ENCODE measurements at regions of chr18 and their contacts with region 1.

Region 1: DNA sequence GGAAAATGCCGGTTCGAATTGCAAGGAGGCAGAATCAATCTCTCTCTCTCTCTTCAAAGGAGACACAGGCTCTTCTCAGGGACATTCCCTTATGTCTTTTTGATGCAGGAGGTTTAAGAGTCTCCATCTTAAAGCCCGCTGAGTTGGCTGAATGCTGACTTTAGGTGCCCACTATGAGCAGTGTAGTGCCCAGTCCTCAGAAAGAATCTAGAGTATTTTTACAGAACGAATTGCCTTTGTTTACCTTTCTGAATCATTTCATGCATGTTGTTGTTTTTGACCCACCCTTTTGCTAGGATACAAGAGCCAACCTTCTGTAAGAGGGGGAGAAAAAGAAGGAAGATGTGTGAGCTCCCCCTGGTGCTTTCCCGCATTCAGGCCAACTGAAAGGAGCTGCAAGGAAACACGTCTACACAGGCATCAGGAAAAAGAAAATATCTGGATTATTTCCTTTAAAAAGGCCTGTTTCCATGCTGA is 193.5 kb upstream of the TCF4 start:
- DNase-seq: peak; percentile 33 to 67
- ATAC-seq: peak; percentile 57 to 80 (median 73)
- H3K4me3 ChIP-seq: no peak overlapping the region
- H3K27ac ChIP-seq: peak overlapping the region; percentile 82
- H3K4me1 ChIP-seq: peaks cover 9% of the 10 kb centered on the region
- H3K27me3 ChIP-seq: no peaks in the 10 kb centered on the region
- CTCF ChIP-seq: peak; percentile 73

Region 2: DNA sequence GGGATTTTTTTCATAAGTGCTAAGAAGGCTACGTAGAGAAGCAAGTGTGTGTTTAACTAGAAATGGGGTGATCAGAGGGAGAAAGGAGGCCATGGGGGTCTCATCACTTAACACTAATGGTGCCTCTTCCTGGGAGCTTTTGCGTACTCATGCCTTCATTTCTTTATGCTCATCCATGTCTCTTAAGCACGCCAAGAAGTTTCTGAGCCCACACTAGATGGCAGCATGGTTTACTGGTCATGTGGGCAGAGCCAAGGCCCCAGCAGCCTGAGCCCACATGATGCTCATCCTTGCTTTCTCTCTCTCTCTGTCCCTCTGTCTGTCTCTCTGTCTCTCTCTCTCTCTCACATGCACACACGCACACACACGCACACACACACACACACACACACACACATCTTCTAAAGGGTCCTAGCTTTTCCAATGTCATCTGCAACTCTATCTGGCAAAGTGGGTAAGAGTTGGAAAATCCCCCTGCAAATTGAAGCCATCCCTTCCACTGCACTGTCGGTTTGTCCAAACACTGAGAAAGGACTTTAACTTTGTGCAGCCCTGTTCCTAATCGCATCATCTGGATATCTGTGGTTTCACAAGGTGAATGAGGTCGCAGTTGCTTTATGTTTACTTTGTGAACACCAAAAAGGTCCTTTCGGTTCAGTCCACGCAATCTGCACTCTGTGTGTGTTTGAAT is 685.1 kb before region 1 on chr18:
- intact Hi-C with region 1: loop called in 1 of 2 experiments (anchors 10 kb)
- DNase-seq: peak in 1 of 2 donors; percentile 53
- ATAC-seq: peak in 3 of 4 donors; percentile 57 to 70 (median 59)
- H3K4me3 ChIP-seq: no peak overlapping the region
- H3K27ac ChIP-seq: no peak overlapping the region
- H3K4me1 ChIP-seq: no peaks in the 10 kb centered on the region
- H3K27me3 ChIP-seq: no peaks in the 10 kb centered on the region
- CTCF ChIP-seq: peak; percentile 34

Region 3: DNA sequence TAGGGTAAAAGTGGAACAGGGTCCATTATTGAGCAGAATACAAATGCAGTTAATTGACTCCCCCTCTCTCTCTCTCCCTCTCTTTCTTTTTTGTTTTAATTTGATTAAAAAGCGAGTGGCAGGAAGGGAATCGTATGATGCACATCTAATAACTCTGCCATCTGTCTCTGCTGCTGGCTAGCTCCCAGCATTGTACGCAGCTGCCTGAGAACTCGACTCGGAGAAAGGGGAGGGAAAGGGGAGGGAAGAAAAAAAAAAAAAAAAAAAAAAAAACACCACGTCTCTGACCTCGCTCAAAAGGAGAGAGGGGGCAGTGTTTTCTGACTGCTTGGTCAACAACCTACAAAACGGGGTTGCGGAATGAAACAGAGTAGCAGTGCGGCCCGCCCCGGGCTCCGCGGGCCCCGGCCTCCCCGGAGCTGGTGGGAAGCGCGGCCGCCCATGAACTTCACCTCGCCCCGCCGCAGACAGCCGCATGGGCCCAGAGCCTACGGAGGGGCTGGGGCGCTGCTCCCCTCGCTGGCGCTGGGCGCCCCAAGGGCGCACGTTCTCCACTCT is 459.3 kb before region 1 on chr18:
- intact Hi-C with region 1: loop called (anchors 5 kb)
- DNase-seq: peak; percentile 90 to 94
- ATAC-seq: peak; percentile 87 to 93 (median 89)
- H3K4me3 ChIP-seq: peak overlapping the region; percentile 77
- H3K27ac ChIP-seq: peak overlapping the region; percentile 89
- H3K4me1 ChIP-seq: peaks cover 40% of the 10 kb centered on the region
- H3K27me3 ChIP-seq: no peaks in the 10 kb centered on the region
- CTCF ChIP-seq: peak; percentile 8

Region 4: DNA sequence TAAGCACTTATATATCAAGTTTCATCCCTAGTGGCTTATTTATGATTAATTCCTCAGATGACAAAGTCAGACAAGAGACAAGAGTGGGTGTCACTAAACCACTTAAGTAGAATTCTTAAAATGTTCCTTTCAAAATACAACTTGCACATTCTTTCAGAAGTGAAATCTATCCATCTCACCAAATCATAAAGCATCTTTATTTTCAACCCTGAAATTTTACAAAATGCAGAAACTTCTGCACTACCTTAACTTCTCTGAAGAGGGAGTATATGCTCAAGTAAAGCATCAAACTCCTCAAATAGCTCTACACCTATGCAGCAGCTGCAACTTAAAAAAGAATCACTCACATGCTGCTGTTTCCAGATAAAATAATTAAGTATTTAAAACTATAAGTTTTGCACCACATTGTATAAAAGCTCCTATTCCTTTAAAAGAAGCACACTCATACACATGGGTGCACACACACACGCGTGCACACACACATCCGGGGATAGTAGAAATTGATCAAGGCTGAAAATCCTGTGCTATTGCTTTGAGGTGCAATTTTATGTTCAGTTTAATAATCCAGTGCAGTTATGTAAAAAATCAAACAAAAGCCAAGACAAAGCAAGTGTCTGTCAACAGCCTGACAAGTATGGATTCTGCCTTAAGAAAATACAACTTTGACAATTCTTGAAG is 438.0 kb before region 1 on chr18:
- intact Hi-C with region 1: loop called in 1 of 2 experiments (anchors 2 kb)
- DNase-seq: no peak
- ATAC-seq: peak in 3 of 4 donors; percentile 63 to 75 (median 72)
- H3K4me3 ChIP-seq: no peak overlapping the region
- H3K27ac ChIP-seq: no peak overlapping the region
- H3K4me1 ChIP-seq: peaks cover 43% of the 10 kb centered on the region
- H3K27me3 ChIP-seq: no peaks in the 10 kb centered on the region
- CTCF ChIP-seq: peak; percentile 65

Region 5: DNA sequence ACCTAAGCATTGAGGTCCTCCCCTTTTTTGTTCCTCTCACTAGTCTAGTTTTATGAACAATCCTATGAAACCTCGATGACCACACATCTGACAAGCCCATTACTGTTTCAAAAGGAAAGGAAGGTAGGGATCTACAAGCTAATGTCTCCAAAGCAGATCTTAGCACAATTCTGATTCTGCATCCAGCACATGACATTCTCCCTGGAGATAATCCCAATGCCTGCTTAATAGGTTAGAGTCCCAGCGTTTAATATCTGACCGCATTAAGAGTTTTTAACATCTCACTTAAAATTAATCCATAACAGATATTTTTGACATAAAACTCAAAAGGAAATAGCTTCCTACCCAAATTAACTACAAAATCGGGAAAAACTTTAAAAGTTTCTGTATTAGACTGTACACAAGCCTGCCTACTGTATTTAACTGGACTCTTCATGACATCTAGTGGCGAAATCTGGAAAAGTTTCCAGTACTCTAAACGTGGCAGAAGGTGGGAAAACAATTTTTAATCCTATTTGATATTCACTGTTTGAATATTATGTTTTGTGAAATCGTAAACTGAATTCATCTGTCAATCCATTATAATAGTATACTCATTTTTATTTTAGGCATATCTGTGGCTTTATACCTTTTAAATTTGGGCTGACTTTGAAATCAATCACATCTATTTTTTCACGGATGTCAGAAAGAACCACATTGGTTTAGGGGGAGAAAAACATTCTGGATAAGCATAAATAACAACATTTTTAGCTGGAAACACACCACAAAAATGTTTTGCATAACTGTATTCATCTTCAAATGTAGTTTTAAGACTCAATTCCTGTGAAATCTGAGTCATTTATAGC is 794.5 kb after region 1 on chr18:
- intact Hi-C with region 1: loop called in 1 of 2 experiments (anchors 10 kb)
- DNase-seq: no peak
- ATAC-seq: peak in 3 of 4 donors; percentile 52 to 91 (median 65)
- H3K4me3 ChIP-seq: no peak overlapping the region
- H3K27ac ChIP-seq: no peak overlapping the region
- H3K4me1 ChIP-seq: peaks cover 15% of the 10 kb centered on the region
- H3K27me3 ChIP-seq: peaks cover 0 to 3% (median 0%) of the 10 kb centered on the region in 3 donors
- CTCF ChIP-seq: peak; percentile 72

Measured in psoas muscle (tissue), 8 donors.